Cardiac septum (tissue), 1 donor: ENCODE measurements at regions of chr6 and their contacts with region 1.

Region 1: DNA sequence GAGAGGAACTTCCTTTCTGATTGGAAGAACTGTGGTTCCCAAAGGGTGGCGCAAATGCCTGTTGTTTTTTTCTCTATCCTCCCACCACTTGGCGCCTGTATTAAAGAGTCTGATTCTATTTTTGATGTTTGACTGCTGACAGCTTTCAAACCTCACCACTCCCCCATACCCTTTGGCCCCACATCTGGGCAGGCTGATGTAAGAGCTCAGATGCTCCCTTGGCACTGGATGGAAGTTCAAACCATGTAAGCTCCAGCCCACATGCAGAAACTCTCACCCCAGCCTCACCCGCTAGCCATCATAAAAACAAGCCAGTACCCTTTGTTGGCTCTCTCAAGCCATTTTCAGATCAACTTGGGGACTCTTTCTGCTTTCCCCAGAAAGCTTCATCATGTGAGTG is 20.0 kb upstream of the TMEM14A start:
- DNase-seq: no peak

Region 2: DNA sequence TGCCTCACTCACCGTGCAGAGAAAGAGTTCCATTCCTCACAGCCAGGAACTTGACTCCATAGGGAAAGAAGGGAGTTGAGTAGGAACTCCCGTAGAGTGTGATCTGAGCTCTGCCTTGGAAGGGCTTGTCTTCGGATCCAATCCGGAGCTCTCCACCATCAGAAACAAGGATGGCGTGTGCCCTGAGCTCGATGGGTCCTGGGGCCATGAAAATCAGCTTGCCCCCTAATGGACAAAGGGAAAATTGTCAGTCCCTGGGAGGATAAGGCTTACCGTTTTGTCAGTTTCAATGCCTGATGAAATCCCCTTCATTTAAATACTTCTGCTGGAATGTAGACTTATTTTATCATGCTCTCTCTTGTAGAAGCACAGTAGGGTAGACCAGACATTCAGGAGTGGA is 716.8 kb before region 1 on chr6:
- intact Hi-C with region 1: no loop called
- DNase-seq: no peak

Region 3: GRCh38 chr6:52598123-52598823 is 52.7 kb before region 1 on chr6:
- intact Hi-C with region 1: loop called (anchors 5 kb)
- DNase-seq: no peak